Activated T-helper 1 cell treated with anti-CD3 and anti-CD28 coated beads, Interleukin-12 subunit alpha, Interleukin-12 subunit beta, Interleukin-2, Interleukin-4 antibody, amounts not matched to agents 30 ng/mL and 10 ng/mL and 1 ng/mL, durations not matched to agents 14 hours and 24 hours and 36 hours (primary cell): ENCODE measurements at regions of chr14 and their contacts with region 1.

Region 1: DNA sequence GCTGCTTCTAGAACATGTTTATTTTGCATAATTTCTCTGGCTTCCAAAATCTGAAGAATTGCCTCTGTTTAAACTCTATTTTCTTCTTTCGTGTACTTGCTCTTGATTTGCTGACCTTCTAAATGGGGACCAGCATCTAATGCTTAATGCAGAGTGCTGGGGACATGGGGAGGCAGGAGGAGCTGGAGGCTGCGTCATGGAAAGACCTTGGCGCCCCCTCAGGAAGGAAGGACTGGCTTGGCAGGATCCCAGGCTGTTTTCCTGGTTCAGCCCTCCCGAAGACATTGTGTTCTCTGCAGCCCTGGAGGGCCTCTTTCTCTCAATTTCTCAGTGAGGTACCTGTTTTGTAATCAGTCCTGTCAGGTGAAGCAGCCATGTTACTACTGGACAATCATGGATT is 5.5 kb downstream of the PRKCH start:
- DNase-seq: no peak
- H3K4me3 Mint-ChIP-seq: peak overlapping the region; percentile 93
- H3K27ac Mint-ChIP-seq: peak overlapping the region; percentile 86
- H3K4me1 Mint-ChIP-seq: peaks cover 77% of the 10 kb centered on the region
- H3K27me3 Mint-ChIP-seq: no peaks in the 10 kb centered on the region

Region 2: DNA sequence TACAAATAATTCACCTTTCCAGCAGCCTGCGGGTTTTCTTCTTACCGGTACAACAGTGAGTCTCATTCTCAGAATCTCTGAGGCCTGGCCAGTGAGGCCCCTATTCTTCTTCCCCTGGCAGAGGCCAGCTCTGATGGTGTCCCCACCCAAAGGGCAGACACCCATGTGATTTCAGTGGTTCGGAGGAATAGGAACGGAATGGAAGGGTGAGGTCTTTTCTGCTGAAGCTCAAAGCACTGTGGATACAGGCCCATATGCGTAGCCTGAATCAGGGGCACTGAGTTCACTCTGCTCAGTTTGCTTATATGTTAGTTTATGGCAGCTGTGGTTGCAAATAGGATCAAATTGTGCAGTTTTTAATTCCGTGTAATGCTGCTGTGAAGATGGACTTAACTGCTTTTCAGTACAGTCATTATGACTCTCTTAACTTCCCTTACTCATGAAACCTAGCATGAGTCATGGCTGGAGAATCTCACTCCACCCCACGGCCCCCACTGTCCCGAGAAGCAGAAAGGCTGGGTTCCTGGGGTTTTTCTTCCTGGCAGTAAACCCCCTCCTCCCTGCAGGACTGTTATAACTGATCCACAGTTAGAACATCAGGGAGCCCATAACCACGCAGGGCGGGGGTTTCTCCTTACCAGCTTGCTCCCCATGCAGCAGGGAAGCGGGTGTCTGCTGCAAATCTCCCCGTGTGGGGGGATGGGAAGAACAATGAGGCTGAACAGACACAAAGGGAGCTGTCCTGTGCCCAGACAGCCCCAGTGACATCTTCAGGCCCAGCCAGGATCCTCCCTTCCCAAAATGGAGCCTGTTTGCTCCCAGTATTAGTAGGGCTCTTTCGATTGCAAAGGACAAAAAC is 223.1 kb before region 1 on chr14:
- intact Hi-C with region 1: loop called (anchors 5 kb)
- DNase-seq: peak; percentile 25
- H3K4me3 Mint-ChIP-seq: peak overlapping the region; percentile 35
- H3K27ac Mint-ChIP-seq: peak overlapping the region; percentile 82
- H3K4me1 Mint-ChIP-seq: peaks cover 38% of the 10 kb centered on the region
- H3K27me3 Mint-ChIP-seq: no peaks in the 10 kb centered on the region

Region 3: GRCh38 chr14:61247935-61248334 is 78.9 kb before region 1 on chr14:
- intact Hi-C with region 1: no loop called
- DNase-seq: no peak
- H3K4me3 Mint-ChIP-seq: no peak overlapping the region
- H3K27ac Mint-ChIP-seq: no peak overlapping the region
- H3K4me1 Mint-ChIP-seq: peaks cover 23% of the 10 kb centered on the region
- H3K27me3 Mint-ChIP-seq: peaks cover 11% of the 10 kb centered on the region

Region 4: GRCh38 chr14:61342486-61342885 is 15.6 kb after region 1 on chr14:
- intact Hi-C with region 1: loop called (anchors 1 kb)
- DNase-seq: peak; percentile 85
- H3K4me3 Mint-ChIP-seq: peak overlapping the region; percentile 82
- H3K27ac Mint-ChIP-seq: peak overlapping the region; percentile 97
- H3K4me1 Mint-ChIP-seq: peaks cover 92% of the 10 kb centered on the region
- H3K27me3 Mint-ChIP-seq: no peaks in the 10 kb centered on the region

Region 5: GRCh38 chr14:61403411-61403810 is 76.6 kb after region 1 on chr14:
- intact Hi-C with region 1: loop called (anchors 2 kb)
- DNase-seq: peak; percentile 45
- H3K4me3 Mint-ChIP-seq: peak overlapping the region; percentile 31
- H3K27ac Mint-ChIP-seq: peak overlapping the region; percentile 87
- H3K4me1 Mint-ChIP-seq: peaks cover 79% of the 10 kb centered on the region
- H3K27me3 Mint-ChIP-seq: no peaks in the 10 kb centered on the region

Region 6: DNA sequence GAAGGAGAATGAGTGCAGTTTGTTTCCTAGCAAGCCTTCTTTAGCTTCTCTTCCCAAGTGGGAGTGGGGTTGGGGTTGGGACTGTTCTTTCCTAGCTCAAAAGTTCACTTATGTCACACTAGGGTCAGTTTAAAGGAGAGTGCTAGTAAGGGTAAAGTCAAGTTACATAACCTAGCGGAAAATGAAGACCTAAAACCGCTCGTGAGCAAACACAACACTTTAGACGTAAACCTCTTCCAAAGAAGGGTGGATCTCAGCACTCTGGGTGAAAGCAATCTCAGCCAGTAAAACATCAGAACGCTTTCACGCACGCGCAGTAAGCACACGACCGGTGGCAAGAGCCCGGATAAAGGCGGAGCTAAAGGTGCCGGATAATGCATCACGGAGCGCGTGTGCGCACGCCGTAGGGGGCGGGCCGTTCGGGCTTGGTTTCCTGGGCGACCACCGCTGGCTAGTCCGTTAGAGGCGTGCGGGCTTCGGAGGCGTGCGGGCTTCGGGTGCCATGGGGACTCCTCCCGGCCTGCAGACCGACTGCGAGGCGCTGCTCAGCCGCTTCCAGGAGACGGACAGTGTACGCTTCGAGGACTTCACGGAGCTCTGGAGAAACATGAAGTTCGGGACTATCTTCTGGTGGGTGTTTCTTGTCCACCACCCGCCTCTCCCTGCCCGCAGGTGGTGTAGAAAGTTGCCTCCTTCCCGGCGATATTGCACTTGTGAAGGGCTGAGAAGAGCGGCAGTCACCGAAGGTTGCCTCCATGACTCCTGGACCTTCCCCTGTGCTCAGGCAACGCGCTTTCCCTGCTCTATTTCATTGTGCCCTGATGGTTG is 435.3 kb after region 1 on chr14 and contains the start of gene SNAPC1:
- intact Hi-C with region 1: loop called (anchors 5 kb)
- DNase-seq: peak; percentile 97
- H3K4me3 Mint-ChIP-seq: peak within 1 kb of the TSS; percentile 91
- H3K27ac Mint-ChIP-seq: peak within 1 kb of the TSS; percentile 90
- H3K4me1 Mint-ChIP-seq: peaks cover 59% of the 10 kb centered on the region
- H3K27me3 Mint-ChIP-seq: peaks cover 3% of the 10 kb centered on the region
- total RNA-seq, gene SNAPC1: 10.8 and 11.0 TPM in 2 replicates